Adrenal gland (tissue), 19 donors: ENCODE measurements at regions of chr11 and their contacts with region 1.

Region 1: DNA sequence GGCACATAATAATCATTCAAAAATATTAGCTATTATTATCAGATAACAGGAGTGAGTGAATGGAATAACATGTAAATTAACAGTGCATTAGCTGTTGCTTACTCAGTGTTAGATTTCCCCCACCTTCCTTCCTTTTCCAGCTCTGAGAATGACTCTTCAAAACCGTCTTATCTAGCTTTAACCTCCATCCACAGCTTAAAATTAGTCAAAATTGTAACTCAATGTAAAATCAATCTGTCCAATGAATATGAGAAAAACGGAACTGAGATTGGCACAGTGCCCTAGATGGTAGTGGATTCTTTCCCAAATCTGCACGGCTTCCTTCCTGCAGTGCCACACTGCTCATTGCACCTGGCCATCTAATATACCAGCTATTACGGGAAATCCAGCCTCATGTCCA is 156.8 kb upstream of the BDNF start:
- DNase-seq: no peak
- H3K4me3 ChIP-seq: no peak overlapping the region
- H3K27ac ChIP-seq: no peak overlapping the region
- H3K4me1 ChIP-seq: no peaks in the 10 kb centered on the region
- H3K27me3 ChIP-seq: no peaks in the 10 kb centered on the region
- CTCF ChIP-seq: no peak
- POLR2A ChIP-seq: no peak

Region 2: DNA sequence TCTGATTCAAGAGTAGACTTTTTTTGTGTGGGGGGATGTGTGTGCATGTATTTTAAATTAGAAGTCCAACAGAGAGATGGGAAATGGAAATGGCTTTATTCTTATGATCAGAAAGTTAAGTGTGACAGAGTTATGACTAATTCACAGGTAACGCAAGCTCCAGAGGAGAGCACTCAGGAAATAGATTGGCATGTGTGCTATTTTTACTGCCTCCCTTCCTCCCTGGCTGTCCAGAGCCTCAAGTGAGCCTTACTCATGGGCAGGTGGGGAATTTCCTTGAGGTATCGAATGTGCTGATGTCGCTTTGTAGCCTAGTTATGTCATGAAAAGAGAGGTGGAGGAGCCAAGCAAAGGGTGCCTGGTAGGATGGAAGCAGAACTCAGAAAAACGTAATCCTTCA is 86.4 kb before region 1 on chr11:
- intact Hi-C with region 1: no loop called
- DNase-seq: no peak
- H3K4me3 ChIP-seq: no peak overlapping the region
- H3K27ac ChIP-seq: no peak overlapping the region
- H3K4me1 ChIP-seq: no peaks in the 10 kb centered on the region
- H3K27me3 ChIP-seq: no peaks in the 10 kb centered on the region
- CTCF ChIP-seq: no peak
- POLR2A ChIP-seq: no peak

Region 3: DNA sequence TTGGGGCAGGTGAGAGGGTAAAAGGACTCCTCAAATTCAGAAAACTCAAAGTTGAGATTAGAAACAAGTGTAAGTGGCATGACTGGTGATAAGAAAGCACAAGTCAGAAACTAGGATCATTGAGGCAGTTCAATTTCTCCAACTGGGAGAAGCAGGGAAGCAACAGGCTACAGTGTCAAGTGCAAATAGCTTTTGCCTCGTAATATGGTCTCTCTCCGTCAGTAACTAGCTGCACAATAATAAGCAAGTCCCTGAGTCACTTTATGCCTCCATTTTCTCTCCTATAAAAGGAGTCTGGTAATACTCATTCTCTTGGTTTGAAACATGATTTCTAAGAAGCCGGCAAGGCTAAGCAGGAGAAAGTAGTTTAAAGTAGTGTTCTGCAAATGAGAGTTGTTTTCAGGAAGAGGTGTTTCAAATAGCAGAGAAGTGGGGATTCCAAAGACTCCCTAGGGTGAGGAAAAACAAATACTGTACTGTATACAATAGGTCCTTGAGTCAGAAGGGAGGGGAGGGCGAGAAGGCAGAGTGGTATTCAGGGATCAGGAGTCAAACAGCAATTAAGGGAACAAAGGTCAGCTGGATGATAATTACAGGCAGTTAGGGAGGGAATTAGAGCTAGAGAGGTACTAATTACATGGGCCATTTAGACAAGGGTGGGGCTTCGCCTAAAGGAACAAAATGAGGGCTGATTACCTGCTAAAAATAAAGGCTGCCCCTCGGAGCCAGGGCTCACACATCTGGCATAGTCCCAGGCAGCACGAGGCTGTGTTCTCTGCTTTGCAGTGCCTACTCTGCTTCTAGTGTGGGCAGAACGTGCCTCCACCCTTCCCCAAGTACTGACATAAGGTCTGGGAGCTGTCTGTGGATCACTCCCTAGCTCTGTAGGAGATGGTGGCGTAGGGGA is 60.8 kb before region 1 on chr11:
- intact Hi-C with region 1: loop called in 1 of 2 experiments (anchors 10 kb)
- DNase-seq: no peak
- H3K4me3 ChIP-seq: no peak overlapping the region
- H3K27ac ChIP-seq: no peak overlapping the region
- H3K4me1 ChIP-seq: no peaks in the 10 kb centered on the region
- H3K27me3 ChIP-seq: no peaks in the 10 kb centered on the region
- CTCF ChIP-seq: no peak
- POLR2A ChIP-seq: no peak

Region 4: DNA sequence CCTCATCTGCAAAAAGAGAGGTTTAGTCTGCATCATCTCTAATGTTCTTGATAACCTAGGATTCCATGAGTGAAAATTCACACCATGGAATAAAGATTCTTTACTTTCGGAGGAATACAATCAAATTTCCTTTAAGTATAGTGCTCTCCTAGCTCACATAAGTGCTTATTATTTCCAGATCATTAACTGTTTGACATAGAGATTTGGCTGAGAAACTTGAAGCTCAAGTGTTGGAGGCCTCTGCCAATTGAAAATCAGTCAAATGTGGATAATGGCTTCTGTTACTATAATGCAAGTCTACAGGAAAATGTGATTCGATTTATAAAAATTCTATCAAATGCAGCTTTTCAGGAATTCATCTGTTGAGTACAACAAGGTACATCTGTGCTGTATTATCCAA is 106.4 kb after region 1 on chr11:
- intact Hi-C with region 1: no loop called
- DNase-seq: no peak
- H3K4me3 ChIP-seq: no peak overlapping the region
- H3K27ac ChIP-seq: no peak overlapping the region
- H3K4me1 ChIP-seq: no peaks in the 10 kb centered on the region
- H3K27me3 ChIP-seq: no peaks in the 10 kb centered on the region
- CTCF ChIP-seq: no peak
- POLR2A ChIP-seq: no peak

Region 5: DNA sequence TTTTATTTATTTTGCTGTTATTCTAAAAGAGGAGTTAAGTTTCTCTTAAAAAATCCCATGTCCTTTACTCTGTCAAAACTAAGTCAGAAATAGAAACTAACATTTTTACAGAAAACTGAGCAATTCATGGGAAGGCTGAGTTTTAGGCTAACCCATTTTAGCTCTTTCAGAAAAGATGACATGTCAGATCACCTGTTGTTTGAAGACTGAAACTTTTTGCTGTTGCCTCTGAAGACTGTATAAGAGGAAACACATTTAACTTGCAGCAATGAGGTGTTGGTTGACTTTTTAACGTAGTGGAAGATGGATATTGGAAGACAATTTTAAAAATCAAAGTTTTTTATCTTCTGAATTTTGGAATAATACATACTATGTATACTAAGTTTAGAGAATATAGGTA is 366.6 kb after region 1 on chr11:
- intact Hi-C with region 1: no loop called
- DNase-seq: no peak
- H3K4me3 ChIP-seq: no peak overlapping the region
- H3K27ac ChIP-seq: no peak overlapping the region
- H3K4me1 ChIP-seq: no peaks in the 10 kb centered on the region
- H3K27me3 ChIP-seq: no peaks in the 10 kb centered on the region
- CTCF ChIP-seq: no peak
- POLR2A ChIP-seq: no peak